ENCODE measurements at regions of chr3 and their contacts with region 1.

Region 1: DNA sequence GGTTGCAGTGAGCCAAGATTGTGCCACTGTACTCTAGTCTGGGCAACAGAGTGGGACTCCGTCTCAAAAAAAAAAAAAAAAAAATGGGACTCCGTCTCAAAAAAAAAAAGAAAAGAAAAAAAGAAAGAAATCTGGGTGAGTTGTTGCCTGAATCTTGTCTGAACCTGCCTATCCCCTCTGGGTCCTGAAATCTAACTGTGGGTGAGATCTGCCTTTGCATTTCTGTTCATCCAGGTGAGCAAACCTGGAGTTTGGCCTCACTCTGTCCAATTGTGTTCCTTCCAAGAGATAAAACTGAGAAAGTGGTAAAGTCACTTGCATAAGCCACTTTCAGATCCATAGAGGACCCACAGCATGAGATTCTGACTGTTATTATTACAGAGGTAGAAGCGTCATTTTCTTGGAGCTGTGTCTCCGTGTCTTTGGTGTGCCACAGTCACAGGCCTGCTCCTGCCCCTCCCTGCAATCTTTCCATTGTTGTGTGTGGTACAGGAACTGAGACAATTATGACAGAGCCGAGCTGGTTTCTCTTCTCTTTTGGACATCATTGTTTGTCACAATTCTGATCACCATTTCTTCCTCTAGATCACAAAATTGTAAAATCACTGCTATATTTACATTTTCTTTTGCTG is 235.9 kb downstream of the LPP start:
- DNase-seq: peak; percentile 29
- ATAC-seq: peak; percentile 84
- H3K4me3 Mint-ChIP-seq: peak overlapping the region; percentile 65
- H3K27ac Mint-ChIP-seq: peak overlapping the region; percentile 98
- H3K4me1 Mint-ChIP-seq: peaks cover 87% of the 10 kb centered on the region
- H3K27me3 Mint-ChIP-seq: no peaks in the 10 kb centered on the region
- CTCF ChIP-seq: no peak

Region 2: DNA sequence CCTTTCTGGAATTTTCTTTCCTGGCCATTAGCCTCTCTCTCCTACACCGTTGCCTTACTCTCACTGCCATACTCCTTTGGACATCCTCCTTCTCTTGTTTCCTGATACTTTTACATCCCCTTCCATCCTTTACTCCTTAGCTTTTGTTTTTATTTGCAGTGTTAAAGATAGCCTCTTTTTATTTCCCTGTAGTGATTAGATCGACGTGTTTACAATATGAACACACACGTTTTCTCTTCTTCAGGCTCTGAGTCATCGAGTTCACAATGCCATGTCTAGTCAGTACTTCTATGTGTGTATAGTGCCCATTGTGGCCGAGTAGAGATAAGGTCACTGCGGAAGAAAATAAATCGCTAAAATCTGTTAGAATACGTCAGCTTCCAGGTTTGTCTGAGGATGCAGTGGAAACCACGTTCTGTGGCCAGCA is 27.4 kb before region 1 on chr3:
- CTCF ChIA-PET with region 1: interaction called, 4 read pairs
- POLR2A ChIA-PET with region 1: interaction called, 7 read pairs
- intact Hi-C with region 1: loop called (anchors 1 kb)
- DNase-seq: no peak
- ATAC-seq: peak; percentile 63
- H3K4me3 Mint-ChIP-seq: peak overlapping the region; percentile 24
- H3K27ac Mint-ChIP-seq: peak overlapping the region; percentile 80
- H3K4me1 Mint-ChIP-seq: peaks cover 78% of the 10 kb centered on the region
- H3K27me3 Mint-ChIP-seq: no peaks in the 10 kb centered on the region
- CTCF ChIP-seq: no peak

Region 3: GRCh38 chr3:188400494-188401243 is 10.8 kb after region 1 on chr3:
- CTCF ChIA-PET with region 1: interaction called, 12 read pairs
- POLR2A ChIA-PET with region 1: interaction called, 49 read pairs
- intact Hi-C with region 1: loop called (anchors 1 kb)
- DNase-seq: no peak
- ATAC-seq: peak; percentile 82
- H3K4me3 Mint-ChIP-seq: peak overlapping the region; percentile 56
- H3K27ac Mint-ChIP-seq: peak overlapping the region; percentile 91
- H3K4me1 Mint-ChIP-seq: peaks cover 93% of the 10 kb centered on the region
- H3K27me3 Mint-ChIP-seq: no peaks in the 10 kb centered on the region
- CTCF ChIP-seq: no peak

Region 4: GRCh38 chr3:188432802-188433520 is 43.1 kb after region 1 on chr3:
- CTCF ChIA-PET with region 1: interaction called, 4 read pairs
- POLR2A ChIA-PET with region 1: interaction called, 20 read pairs
- intact Hi-C with region 1: loop called (anchors 1 kb)
- DNase-seq: no peak
- ATAC-seq: peak; percentile 90
- H3K4me3 Mint-ChIP-seq: peak overlapping the region; percentile 80
- H3K27ac Mint-ChIP-seq: peak overlapping the region; percentile 100
- H3K4me1 Mint-ChIP-seq: peaks cover 91% of the 10 kb centered on the region
- H3K27me3 Mint-ChIP-seq: no peaks in the 10 kb centered on the region
- CTCF ChIP-seq: no peak

Region 5: GRCh38 chr3:188697127-188697526 is 307.3 kb after region 1 on chr3:
- CTCF ChIA-PET with region 1: no interaction called
- POLR2A ChIA-PET with region 1: no interaction called
- intact Hi-C with region 1: loop called (anchors 5 kb)
- DNase-seq: no peak
- ATAC-seq: peak; percentile 80
- H3K4me3 Mint-ChIP-seq: peak overlapping the region; percentile 20
- H3K27ac Mint-ChIP-seq: peak overlapping the region; percentile 86
- H3K4me1 Mint-ChIP-seq: peaks cover 72% of the 10 kb centered on the region
- H3K27me3 Mint-ChIP-seq: no peaks in the 10 kb centered on the region
- CTCF ChIP-seq: no peak